IMR-90 (cell line): ENCODE measurements at regions of chr4 and their contacts with region 1.

Region 1: GRCh38 chr4:189365451-189365850 is 575.2 kb upstream of the FRG1 start:
- DNase-seq: no peak
- ATAC-seq: no peak
- H3K4me3 ChIP-seq: no peak overlapping the region
- H3K27ac ChIP-seq: no peak overlapping the region
- H3K4me1 ChIP-seq: no peaks in the 10 kb centered on the region
- H3K27me3 ChIP-seq: no peaks in the 10 kb centered on the region
- CTCF ChIP-seq: no peak
- POLR2A ChIP-seq: no peak
- RAD21 ChIP-seq: no peak

Region 2: DNA sequence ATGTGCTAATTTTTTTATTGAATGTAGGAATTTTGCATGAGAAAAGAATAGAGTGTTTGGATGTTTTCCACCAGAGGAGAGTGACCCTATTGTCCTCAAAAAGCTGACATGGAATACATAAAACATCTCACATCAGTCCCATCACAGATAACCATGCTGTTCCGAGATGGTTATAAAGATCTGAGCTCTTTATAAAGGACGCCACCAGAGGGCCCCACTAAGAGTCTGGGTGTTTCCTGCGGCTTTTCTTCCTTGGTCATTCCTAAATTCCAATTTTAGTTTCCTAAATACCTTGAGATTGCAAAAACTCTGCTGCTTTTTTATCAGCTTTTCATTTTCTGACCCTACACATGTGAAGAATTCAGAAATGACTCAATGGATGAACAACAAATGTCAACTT is 70.8 kb after region 1 on chr4:
- CTCF ChIA-PET with region 1: no interaction called
- POLR2A ChIA-PET with region 1: no interaction called
- dilution Hi-C with region 1: no loop called
- in situ Hi-C with region 1: no loop called
- intact Hi-C with region 1: loop called (anchors 2 kb)
- DNase-seq: no peak
- ATAC-seq: no peak
- H3K4me3 ChIP-seq: no peak overlapping the region
- H3K27ac ChIP-seq: no peak overlapping the region
- H3K4me1 ChIP-seq: no peaks in the 10 kb centered on the region
- H3K27me3 ChIP-seq: no peaks in the 10 kb centered on the region
- CTCF ChIP-seq: no peak
- POLR2A ChIP-seq: no peak
- RAD21 ChIP-seq: no peak